GM12878 (cell line): ENCODE measurements at regions of chr5 and their contacts with region 1.

Region 1: GRCh38 chr5:43602461-43603343 is at the start of gene NNT:
- DNase-seq: no peak
- ATAC-seq: peak; percentile 87
- H3K4me3 ChIP-seq: peak within 1 kb of the TSS; percentile 93
- H3K27ac ChIP-seq: peak within 1 kb of the TSS; percentile 98
- H3K4me1 ChIP-seq: peaks cover 4% of the 10 kb centered on the region; the same call in 1 of the 2 replicates
- H3K27me3 ChIP-seq: no peaks in the 10 kb centered on the region
- CTCF ChIP-seq: no peak
- EP300 ChIP-seq: no peak
- POLR2A ChIP-seq: peak; percentile 93
- RAD21 ChIP-seq: no peak
- polyA plus RNA-seq, gene NNT: 20.8 to 23.1 TPM

Region 2: DNA sequence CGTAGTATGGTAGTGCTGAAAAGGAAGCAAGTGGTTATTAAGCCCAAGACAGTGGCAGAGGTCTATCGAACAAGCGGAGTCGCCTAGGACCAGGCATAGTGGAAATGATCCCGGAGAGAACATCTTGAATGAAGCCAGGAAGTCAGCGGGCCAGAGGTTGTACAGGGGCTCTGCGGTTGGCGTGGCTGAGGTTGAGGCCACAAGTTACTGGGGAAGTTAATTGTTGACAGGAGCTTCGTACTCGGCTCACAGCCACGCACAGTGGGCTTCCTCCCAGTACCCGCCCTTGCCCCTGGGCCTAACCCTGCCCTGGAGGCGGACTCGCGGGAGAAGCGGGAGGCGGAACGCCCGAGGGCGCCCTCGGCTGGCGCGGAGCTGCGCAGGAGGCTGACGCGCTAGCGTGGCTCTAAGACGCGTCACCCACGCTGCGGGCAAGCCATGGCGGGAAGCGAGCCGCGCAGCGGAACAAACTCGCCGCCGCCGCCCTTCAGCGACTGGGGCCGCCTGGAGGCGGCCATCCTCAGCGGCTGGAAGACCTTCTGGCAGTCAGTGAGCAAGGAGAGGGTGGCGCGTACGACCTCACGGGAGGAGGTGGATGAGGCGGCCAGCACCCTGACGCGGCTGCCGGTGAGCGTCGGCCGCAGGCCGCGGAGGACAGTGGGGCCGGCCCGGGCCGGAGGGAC is 1677.7 kb before region 1 on chr5 and contains the start of gene FBXO4:
- CTCF ChIA-PET with region 1: no interaction called
- POLR2A ChIA-PET with region 1: no interaction called
- RAD21 ChIA-PET with region 1: no interaction called
- SMC1A ChIA-PET with region 1: no interaction called
- in situ Hi-C with region 1: loop called (anchors 25 kb)
- intact Hi-C with region 1: loop called (anchors 10 kb)
- DNase-seq: peak; percentile 63
- ATAC-seq: peak; percentile 96
- H3K4me3 ChIP-seq: peak within 1 kb of the TSS; percentile 84
- H3K27ac ChIP-seq: peak within 1 kb of the TSS; percentile 97
- H3K4me1 ChIP-seq: peaks cover 21% of the 10 kb centered on the region
- H3K27me3 ChIP-seq: no peaks in the 10 kb centered on the region
- CTCF ChIP-seq: peak; percentile 58 to 82 (median 74)
- EP300 ChIP-seq: no peak; a peak in 1 of 4 replicates
- POLR2A ChIP-seq: peak; percentile 96
- RAD21 ChIP-seq: peak; percentile 47; the same call in 1 of the 2 replicates
- polyA plus RNA-seq, gene FBXO4: 7.2 to 13.8 TPM

Region 3: DNA sequence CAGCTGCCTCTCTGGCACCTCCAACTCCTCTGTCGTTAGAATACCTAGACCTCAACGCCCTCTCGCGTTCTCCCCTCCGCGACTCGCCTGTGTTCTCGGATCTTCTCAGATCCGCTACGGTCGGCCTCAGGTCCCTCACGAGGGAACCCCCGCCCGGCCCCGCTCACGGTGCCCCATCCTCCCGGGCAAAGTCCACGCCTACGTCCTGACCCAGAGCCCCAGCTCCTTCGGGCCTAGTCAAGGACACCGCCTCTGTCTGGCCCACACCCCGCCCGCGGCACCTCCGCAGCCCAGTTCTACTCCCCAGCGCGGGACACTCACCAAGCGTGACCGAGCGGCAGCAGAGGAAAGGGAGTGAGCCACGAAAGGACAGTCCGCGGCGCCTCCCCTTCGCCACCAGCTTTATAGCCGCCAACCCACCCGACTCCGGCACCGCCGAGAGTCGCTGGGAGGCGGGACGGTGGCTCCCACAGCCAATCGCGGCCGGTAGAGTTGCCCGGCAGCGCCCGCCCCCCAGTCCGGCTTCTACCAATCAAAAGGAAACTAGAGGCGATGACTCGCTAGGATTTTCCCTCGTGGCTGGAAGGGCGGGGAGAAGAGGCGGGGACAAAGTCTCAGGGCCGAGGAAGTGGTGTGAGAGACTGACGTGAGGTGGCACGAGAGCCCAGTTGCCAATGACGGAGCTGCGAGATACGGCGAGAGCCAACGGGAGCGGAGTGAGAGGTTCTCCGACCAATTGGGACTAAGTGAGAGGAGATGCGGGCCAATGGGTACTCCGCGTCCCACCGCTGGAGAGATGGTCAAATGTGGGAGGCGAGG is 289.5 kb before region 1 on chr5 and contains the start of gene HMGCS1:
- CTCF ChIA-PET with region 1: no interaction called
- POLR2A ChIA-PET with region 1: no interaction called
- RAD21 ChIA-PET with region 1: no interaction called
- SMC1A ChIA-PET with region 1: no interaction called
- in situ Hi-C with region 1: no loop called
- intact Hi-C with region 1: loop called (anchors 5 kb)
- DNase-seq: peak; percentile 100
- ATAC-seq: peak; percentile 92
- H3K4me3 ChIP-seq: peak within 1 kb of the TSS; percentile 79
- H3K27ac ChIP-seq: peak within 1 kb of the TSS; percentile 84
- H3K4me1 ChIP-seq: peaks cover 6% of the 10 kb centered on the region
- H3K27me3 ChIP-seq: no peaks in the 10 kb centered on the region
- CTCF ChIP-seq: peak in 2 of 3 experiments; percentile 6 to 16; a peak in 1 of 6 replicates
- EP300 ChIP-seq: peak in 1 of 2 experiments; percentile 60; a peak in 1 of 4 replicates
- POLR2A ChIP-seq: peak; percentile 99
- RAD21 ChIP-seq: peak; percentile 23; the same call in 1 of the 2 replicates
- polyA plus RNA-seq, gene HMGCS1: 74.9 to 94.1 TPM

Region 4: DNA sequence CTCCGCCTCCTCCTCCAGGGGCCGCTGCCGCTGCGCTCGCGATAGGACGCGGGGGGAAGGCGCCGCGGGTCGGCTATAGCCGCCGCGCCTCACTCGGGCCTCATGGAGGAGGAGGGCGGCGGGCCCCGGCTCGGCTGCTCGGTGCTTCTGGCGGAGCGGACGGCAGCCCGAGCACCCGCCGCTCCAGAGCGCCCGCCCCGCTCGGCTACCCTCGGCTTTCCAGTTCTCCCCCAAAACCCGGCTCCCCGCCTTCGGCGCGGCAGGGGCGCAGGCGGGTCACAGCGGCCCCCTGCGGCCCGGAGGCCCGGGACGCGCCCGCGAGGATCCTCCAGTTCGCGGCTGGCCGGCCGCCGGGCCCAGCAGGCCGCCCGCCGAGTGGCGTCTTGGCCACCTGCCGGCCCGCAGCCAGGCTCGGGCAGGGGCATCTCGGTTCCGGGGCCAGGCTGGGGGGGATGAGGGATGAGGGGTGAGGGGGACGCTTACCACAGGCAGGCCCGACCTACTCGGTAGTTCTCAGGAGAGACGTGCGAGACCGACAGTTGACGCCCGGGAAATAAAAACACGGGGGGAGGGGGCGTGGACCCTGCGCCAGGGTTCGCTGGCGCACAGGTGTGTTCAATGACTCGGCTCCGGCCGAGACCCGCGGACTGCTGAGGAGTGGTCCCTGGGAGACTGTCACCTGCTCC is 45.7 kb before region 1 on chr5 and contains the start of gene PAIP1:
- CTCF ChIA-PET with region 1: interaction called, 31 read pairs
- POLR2A ChIA-PET with region 1: interaction called, 13 read pairs
- RAD21 ChIA-PET with region 1: interaction called, 8 read pairs
- SMC1A ChIA-PET with region 1: interaction called, 13 read pairs
- in situ Hi-C with region 1: no loop called
- intact Hi-C with region 1: loop called (anchors 2 kb)
- DNase-seq: peak; percentile 37
- ATAC-seq: peak; percentile 84
- H3K4me3 ChIP-seq: peak within 1 kb of the TSS; percentile 94
- H3K27ac ChIP-seq: peak within 1 kb of the TSS; percentile 87
- H3K4me1 ChIP-seq: peaks cover 13% of the 10 kb centered on the region
- H3K27me3 ChIP-seq: no peaks in the 10 kb centered on the region
- CTCF ChIP-seq: peak in 2 of 3 experiments; percentile 56 to 61; a peak in 5 of 6 replicates
- EP300 ChIP-seq: no peak
- POLR2A ChIP-seq: peak; percentile 86
- RAD21 ChIP-seq: no peak; the same call in 1 of the 2 replicates
- polyA plus RNA-seq, gene PAIP1: 37.4 to 52.7 TPM

Region 5: GRCh38 chr5:43903129-43903528 is 300.4 kb after region 1 on chr5:
- CTCF ChIA-PET with region 1: no interaction called
- POLR2A ChIA-PET with region 1: no interaction called
- RAD21 ChIA-PET with region 1: no interaction called
- SMC1A ChIA-PET with region 1: no interaction called
- in situ Hi-C with region 1: no loop called
- intact Hi-C with region 1: no loop called
- DNase-seq: no peak
- ATAC-seq: no peak
- H3K4me3 ChIP-seq: no peak overlapping the region
- H3K27ac ChIP-seq: no peak overlapping the region
- H3K4me1 ChIP-seq: no peaks in the 10 kb centered on the region
- H3K27me3 ChIP-seq: no peaks in the 10 kb centered on the region
- CTCF ChIP-seq: no peak
- EP300 ChIP-seq: no peak
- POLR2A ChIP-seq: no peak
- RAD21 ChIP-seq: no peak

Region 6: DNA sequence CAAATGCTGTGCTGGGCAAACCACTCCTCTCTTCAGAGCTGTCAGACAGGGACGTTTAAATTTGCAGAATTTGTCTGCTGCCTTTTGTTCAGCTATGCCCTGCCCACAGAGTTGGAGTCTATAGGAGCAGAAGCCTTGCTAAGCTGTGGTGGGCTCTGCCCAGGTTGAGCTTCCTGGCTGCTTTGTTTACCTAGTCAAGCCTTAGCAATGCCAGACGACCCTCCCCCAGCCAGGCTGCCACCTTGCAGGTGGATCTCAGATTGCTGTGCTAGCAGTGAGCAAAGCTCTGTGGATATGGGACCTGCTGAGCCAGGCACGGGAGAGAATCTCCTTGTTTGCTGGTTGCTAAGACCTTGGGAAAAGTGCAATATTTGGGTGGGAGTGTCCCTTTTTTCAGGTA is 315.2 kb after region 1 on chr5:
- CTCF ChIA-PET with region 1: no interaction called
- POLR2A ChIA-PET with region 1: no interaction called
- RAD21 ChIA-PET with region 1: no interaction called
- SMC1A ChIA-PET with region 1: no interaction called
- in situ Hi-C with region 1: no loop called
- intact Hi-C with region 1: no loop called
- DNase-seq: no peak
- ATAC-seq: no peak
- H3K4me3 ChIP-seq: no peak overlapping the region
- H3K27ac ChIP-seq: no peak overlapping the region
- H3K4me1 ChIP-seq: no peaks in the 10 kb centered on the region
- H3K27me3 ChIP-seq: no peaks in the 10 kb centered on the region
- CTCF ChIP-seq: no peak
- EP300 ChIP-seq: no peak
- POLR2A ChIP-seq: no peak
- RAD21 ChIP-seq: no peak